Left ventricle myocardium inferior (tissue), 1 donor: ENCODE measurements at regions of chr2 and their contacts with region 1.

Region 1: DNA sequence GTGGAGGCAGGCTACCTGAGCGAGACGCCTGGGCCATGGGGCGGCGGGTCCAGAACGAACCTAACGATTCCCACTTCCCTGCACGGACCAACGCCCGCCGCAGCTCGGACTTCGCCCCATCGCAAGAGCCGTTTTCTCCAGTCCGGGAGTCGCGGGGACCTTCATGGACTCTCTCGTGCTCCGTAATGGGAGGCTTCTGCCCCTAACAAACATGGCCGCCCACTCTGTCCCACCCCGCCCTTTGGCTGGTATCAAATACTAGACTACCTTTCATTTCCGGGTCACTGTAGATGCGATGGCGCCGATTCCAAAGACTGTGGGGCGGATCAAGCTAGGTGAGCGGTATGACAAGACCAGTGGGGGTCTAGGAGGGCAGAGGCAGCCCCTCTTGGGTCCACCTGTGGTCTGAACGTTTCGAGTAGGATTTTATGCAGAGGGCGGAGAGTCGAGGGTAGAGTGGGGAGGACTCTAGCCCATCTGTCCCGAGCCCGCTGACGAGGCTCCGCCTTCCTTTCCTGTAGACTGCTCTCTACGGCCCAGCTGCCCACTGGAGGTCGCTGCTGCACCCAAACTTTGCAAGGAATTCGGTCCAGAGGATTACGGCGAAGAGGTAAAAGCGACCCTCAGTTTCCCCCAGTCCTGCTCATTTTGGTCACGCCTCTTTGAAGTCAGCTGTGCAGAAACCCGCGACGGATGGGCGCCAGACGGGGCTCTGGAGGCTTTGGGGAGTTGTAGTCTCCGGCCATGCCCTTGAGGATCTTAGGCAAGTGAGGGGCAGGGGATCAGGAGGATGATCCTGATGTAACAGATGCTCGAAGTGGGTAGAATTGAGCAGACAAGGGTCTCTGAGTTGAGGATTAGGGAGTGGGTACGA is at the starts of genes CCDC142 and TTC31:
- DNase-seq: peak; percentile 95
- H3K4me3 ChIP-seq: peak within 1 kb of the TSS; percentile 99
- H3K27ac ChIP-seq: peak within 1 kb of the TSS; percentile 97
- H3K4me1 ChIP-seq: peaks cover 44% of the 10 kb centered on the region
- H3K27me3 ChIP-seq: no peaks in the 10 kb centered on the region
- CTCF ChIP-seq: peak; percentile 95
- total RNA-seq, gene CCDC142: 5.6 TPM
- total RNA-seq, gene TTC31: 9.5 TPM

Region 2: GRCh38 chr2:74278176-74278575 is 204.9 kb before region 1 on chr2:
- intact Hi-C with region 1: no loop called
- DNase-seq: no peak
- H3K4me3 ChIP-seq: no peak overlapping the region
- H3K27ac ChIP-seq: no peak overlapping the region
- H3K4me1 ChIP-seq: peaks cover 24% of the 10 kb centered on the region
- H3K27me3 ChIP-seq: no peaks in the 10 kb centered on the region
- CTCF ChIP-seq: no peak

Region 3: GRCh38 chr2:74548900-74549826 is 66.1 kb after region 1 on chr2:
- intact Hi-C with region 1: loop called (anchors 10 kb)
- DNase-seq: peak; percentile 79
- H3K4me3 ChIP-seq: peak overlapping the region; percentile 71
- H3K27ac ChIP-seq: peak overlapping the region; percentile 89
- H3K4me1 ChIP-seq: peaks cover 46% of the 10 kb centered on the region
- H3K27me3 ChIP-seq: peaks cover 24% of the 10 kb centered on the region
- CTCF ChIP-seq: no peak

Region 4: GRCh38 chr2:74587664-74588277 is 104.7 kb after region 1 on chr2:
- intact Hi-C with region 1: loop called (anchors 5 kb)
- DNase-seq: peak; percentile 51
- H3K4me3 ChIP-seq: no peak overlapping the region
- H3K27ac ChIP-seq: no peak overlapping the region
- H3K4me1 ChIP-seq: no peaks in the 10 kb centered on the region
- H3K27me3 ChIP-seq: peaks cover 45% of the 10 kb centered on the region
- CTCF ChIP-seq: peak; percentile 81

Region 5: GRCh38 chr2:74632209-74632938 is 149.3 kb after region 1 on chr2:
- intact Hi-C with region 1: no loop called
- DNase-seq: no peak
- H3K4me3 ChIP-seq: no peak overlapping the region
- H3K27ac ChIP-seq: peak overlapping the region; percentile 6
- H3K4me1 ChIP-seq: no peaks in the 10 kb centered on the region
- H3K27me3 ChIP-seq: no peaks in the 10 kb centered on the region
- CTCF ChIP-seq: no peak